Mammary epithelial cell (primary cell): ENCODE measurements at regions of chr1 and their contacts with region 1.

Region 1: GRCh38 chr1:67838180-67838910 is 5.1 kb upstream of the GNG12 start:
- DNase-seq: peak; percentile 52
- H3K4me3 ChIP-seq: no peak overlapping the region
- H3K27ac ChIP-seq: peak overlapping the region; percentile 10
- H3K4me1 ChIP-seq: peaks cover 73% of the 10 kb centered on the region
- H3K27me3 ChIP-seq: no peaks in the 10 kb centered on the region
- CTCF ChIP-seq: no peak

Region 2: GRCh38 chr1:67552336-67552759 is 286.0 kb before region 1 on chr1:
- CTCF ChIA-PET with region 1: no interaction called
- dilution Hi-C with region 1: no loop called
- in situ Hi-C with region 1: loop called in 1 of 2 experiments (anchors 25 kb)
- intact Hi-C with region 1: loop called (anchors 5 kb)
- DNase-seq: peak; percentile 67
- H3K4me3 ChIP-seq: no peak overlapping the region
- H3K27ac ChIP-seq: no peak overlapping the region
- H3K4me1 ChIP-seq: peaks cover 9% of the 10 kb centered on the region
- H3K27me3 ChIP-seq: no peaks in the 10 kb centered on the region
- CTCF ChIP-seq: peak in 1 of 2 donors; percentile 1

Region 3: DNA sequence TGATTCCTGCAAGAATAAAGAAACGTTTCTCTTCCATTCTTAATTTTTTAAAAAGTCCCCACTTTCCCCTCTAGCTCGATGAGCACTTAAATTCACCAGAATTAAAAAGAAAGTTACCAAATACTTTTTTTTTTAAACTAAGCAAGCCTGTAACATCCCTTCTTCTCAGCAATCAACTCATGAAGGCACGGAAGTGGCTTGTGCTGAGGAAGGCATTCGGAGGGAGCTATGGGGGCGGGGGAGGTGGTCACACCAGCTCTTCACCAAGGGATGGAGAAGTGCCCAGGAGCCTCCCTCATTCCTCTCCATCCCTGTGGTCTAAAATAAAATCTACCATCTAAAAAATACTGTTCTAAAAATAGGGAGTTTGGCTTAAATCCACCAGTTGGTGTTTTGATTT is 92.0 kb before region 1 on chr1:
- CTCF ChIA-PET with region 1: no interaction called
- dilution Hi-C with region 1: no loop called
- in situ Hi-C with region 1: no loop called
- intact Hi-C with region 1: no loop called
- DNase-seq: no peak
- H3K4me3 ChIP-seq: no peak overlapping the region
- H3K27ac ChIP-seq: no peak overlapping the region
- H3K4me1 ChIP-seq: peaks cover 44% of the 10 kb centered on the region
- H3K27me3 ChIP-seq: no peaks in the 10 kb centered on the region
- CTCF ChIP-seq: no peak